Breast epithelium (tissue), 4 donors: ENCODE measurements at regions of chr2 and their contacts with region 1.

Region 1: DNA sequence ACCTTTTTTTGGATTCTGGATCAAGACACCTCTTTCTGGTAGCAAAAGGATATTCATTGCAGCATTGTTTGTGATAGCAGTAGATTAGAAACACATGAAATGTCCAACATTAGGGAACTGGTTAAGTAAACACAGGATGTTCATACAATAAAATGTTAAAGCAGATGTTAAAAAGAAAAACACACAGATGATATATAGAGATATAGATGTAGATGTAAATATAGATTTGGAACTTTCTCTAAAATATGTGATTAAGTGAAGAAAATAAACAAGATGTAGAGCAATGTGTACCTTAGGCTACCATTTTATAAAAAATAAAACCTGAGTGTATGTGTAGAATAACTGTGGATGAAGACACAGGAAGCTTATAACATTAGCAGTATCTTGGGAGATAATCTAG is 7.7 kb downstream of the DAPL1 start:
- DNase-seq: no peak
- H3K4me3 ChIP-seq: no peak overlapping the region
- H3K27ac ChIP-seq: no peak overlapping the region
- H3K4me1 ChIP-seq: no peaks in the 10 kb centered on the region
- H3K27me3 ChIP-seq: no peaks in the 10 kb centered on the region
- CTCF ChIP-seq: no peak
- POLR2A ChIP-seq: no peak

Region 2: DNA sequence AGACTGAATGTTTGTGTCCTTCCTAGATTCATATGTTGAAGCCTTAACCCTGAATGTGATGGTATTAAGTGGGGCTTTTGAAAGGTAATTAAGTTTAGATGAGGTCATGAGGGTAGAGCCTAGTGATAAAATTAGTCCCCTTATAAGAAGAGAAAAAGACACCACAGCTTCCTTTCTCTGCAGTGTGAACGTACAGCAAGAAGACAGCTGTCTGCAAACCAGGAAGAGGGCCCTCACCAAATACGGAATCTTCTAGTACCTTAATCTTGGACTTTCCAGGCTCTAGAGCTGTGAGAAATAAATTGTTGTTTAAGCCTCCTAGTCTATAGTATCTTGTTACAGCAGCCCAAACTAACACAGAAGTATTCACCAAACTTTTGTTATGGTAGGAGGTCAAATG is 1301.8 kb before region 1 on chr2:
- intact Hi-C with region 1: loop called (anchors 5 kb)
- DNase-seq: no peak
- H3K4me3 ChIP-seq: no peak overlapping the region
- H3K27ac ChIP-seq: no peak overlapping the region
- H3K4me1 ChIP-seq: no peaks in the 10 kb centered on the region
- H3K27me3 ChIP-seq: no peaks in the 10 kb centered on the region
- CTCF ChIP-seq: no peak
- POLR2A ChIP-seq: no peak

Region 3: GRCh38 chr2:157932480-157933159 is 870.2 kb before region 1 on chr2:
- intact Hi-C with region 1: no loop called
- DNase-seq: no peak
- H3K4me3 ChIP-seq: no peak overlapping the region
- H3K27ac ChIP-seq: no peak overlapping the region
- H3K4me1 ChIP-seq: no peaks in the 10 kb centered on the region
- H3K27me3 ChIP-seq: no peaks in the 10 kb centered on the region
- CTCF ChIP-seq: no peak
- POLR2A ChIP-seq: no peak

Region 4: GRCh38 chr2:158745044-158745865 is 57.6 kb before region 1 on chr2:
- intact Hi-C with region 1: no loop called
- DNase-seq: peak in 1 of 2 donors; percentile 60
- H3K4me3 ChIP-seq: no peak overlapping the region
- H3K27ac ChIP-seq: no peak overlapping the region
- H3K4me1 ChIP-seq: no peaks in the 10 kb centered on the region
- H3K27me3 ChIP-seq: no peaks in the 10 kb centered on the region
- CTCF ChIP-seq: peak; percentile 15 to 77 (median 73)
- POLR2A ChIP-seq: no peak